ENCODE measurements at regions of chr11 and their contacts with region 1.

Region 1: GRCh38 chr11:86230921-86231430 is 13.6 kb upstream of the EED start:
- H3K4me3 ChIP-seq: no peak overlapping the region
- H3K27ac ChIP-seq: no peak overlapping the region
- H3K4me1 ChIP-seq: no peaks in the 10 kb centered on the region
- CTCF ChIP-seq: no peak

Region 2: DNA sequence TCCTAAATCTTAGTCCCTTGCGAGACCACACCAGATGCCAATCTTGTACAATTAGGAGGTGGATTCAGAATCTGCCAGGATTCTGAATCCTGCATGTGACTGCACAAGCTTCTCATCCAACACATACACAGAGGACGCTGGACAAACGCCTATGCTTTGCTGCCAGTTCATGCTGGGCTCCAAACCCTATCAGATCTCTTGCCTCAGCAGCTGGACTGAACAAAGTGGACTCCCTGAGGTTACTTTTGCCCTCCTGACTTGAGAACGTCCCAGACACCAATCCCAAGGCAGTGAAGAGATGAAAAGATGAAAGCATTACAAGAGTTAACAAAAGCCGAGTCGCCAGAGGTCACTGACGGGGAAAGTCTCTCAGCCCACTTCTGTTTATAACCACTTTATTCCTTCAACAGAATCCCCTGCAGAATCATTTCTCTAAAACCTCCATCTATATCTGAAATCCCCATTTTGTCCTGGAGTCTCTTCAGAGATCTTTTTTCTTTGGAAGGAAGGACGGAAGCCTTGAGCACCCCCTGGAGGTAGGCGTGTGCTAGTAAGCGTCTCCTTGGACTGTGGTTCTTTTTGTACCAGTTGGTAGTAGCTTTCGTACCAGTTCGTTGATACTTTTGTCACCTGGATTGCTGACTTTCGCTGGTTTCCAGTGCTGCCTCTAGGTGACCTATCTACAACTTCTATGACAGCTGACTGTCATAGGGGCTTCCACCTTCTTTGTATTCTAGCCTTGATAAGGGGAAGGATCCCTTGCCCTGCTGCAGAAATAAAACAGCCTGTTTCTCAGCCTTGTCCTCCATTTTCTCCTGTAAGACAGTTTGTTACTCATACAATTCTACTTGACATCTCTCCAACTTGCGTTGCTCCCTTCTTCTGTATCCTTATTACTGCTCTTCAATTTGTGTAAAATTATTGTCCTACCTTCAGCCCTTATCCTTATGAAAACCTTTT is 12.6 kb before region 1 on chr11:
- CTCF ChIA-PET with region 1: interaction called, 14 read pairs
- POLR2A ChIA-PET with region 1: no interaction called
- H3K4me3 ChIP-seq: peak overlapping the region; percentile 17
- H3K27ac ChIP-seq: no peak overlapping the region
- H3K4me1 ChIP-seq: no peaks in the 10 kb centered on the region
- CTCF ChIP-seq: 0 out of 2 replicates have a peak, but pooled peaks have one; percentile 31

Measured in HEK293 (cell line).